CD8-positive, alpha-beta T cell (primary cell): ENCODE measurements at regions of chr11 and their contacts with region 1.

Region 1: GRCh38 chr11:66136752-66137123 is 66.7 kb downstream of the PACS1 start:
- DNase-seq: no peak
- ATAC-seq: no peak
- H3K4me3 ChIP-seq: no peak overlapping the region
- H3K4me3 Mint-ChIP-seq: no peak overlapping the region
- H3K27ac ChIP-seq: no peak overlapping the region
- H3K27ac Mint-ChIP-seq: peak overlapping the region; percentile 22
- H3K4me1 ChIP-seq: peaks cover 25% of the 10 kb centered on the region
- H3K4me1 Mint-ChIP-seq: peaks cover 58% of the 10 kb centered on the region
- H3K27me3 ChIP-seq: no peaks in the 10 kb centered on the region
- H3K27me3 Mint-ChIP-seq: no peaks in the 10 kb centered on the region
- CTCF ChIP-seq: no peak

Region 2: DNA sequence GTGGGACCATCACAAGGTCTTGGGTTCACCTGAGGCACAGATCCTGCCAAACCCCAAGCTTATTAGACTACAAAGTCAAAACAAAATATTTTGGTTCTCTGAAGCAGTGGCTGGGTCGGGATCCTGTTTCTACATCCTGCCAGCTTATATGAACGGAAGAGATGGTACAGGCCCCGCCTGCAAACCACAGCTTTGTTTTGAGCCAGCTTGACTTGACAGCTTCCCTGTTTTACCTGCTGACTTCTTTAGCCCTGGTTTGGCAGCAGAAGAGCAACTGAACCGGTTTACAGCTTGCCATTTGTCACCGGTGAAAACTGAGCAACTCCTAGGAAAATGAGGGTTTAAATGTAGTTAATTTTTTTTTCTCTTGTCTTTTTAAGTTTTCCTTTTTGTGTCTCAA is 55.2 kb before region 1 on chr11:
- CTCF ChIA-PET with region 1: interaction called, 13 read pairs
- POLR2A ChIA-PET with region 1: interaction called, 3 read pairs
- intact Hi-C with region 1: no loop called
- DNase-seq: peak; percentile 58 to 92 (median 85)
- ATAC-seq: peak; percentile 89
- H3K4me3 ChIP-seq: peak overlapping the region; percentile 28 to 40
- H3K4me3 Mint-ChIP-seq: peak overlapping the region; percentile 83
- H3K27ac ChIP-seq: peak overlapping the region; percentile 72 to 89
- H3K27ac Mint-ChIP-seq: peak overlapping the region; percentile 99
- H3K4me1 ChIP-seq: peaks cover 90% of the 10 kb centered on the region
- H3K4me1 Mint-ChIP-seq: peaks cover 92% of the 10 kb centered on the region
- H3K27me3 ChIP-seq: no peaks in the 10 kb centered on the region
- H3K27me3 Mint-ChIP-seq: no peaks in the 10 kb centered on the region
- CTCF ChIP-seq: no peak

Region 3: GRCh38 chr11:66100272-66101065 is 36.3 kb before region 1 on chr11:
- CTCF ChIA-PET with region 1: interaction called, 3 read pairs
- POLR2A ChIA-PET with region 1: no interaction called
- intact Hi-C with region 1: loop called in 1 of 2 experiments (anchors 2 kb)
- DNase-seq: peak; percentile 31 to 88 (median 73)
- ATAC-seq: peak; percentile 90
- H3K4me3 ChIP-seq: peak overlapping the region; percentile 40 to 48
- H3K4me3 Mint-ChIP-seq: peak overlapping the region; percentile 82
- H3K27ac ChIP-seq: peak overlapping the region; percentile 45 to 82
- H3K27ac Mint-ChIP-seq: peak overlapping the region; percentile 95
- H3K4me1 ChIP-seq: peaks cover 70% of the 10 kb centered on the region
- H3K4me1 Mint-ChIP-seq: peaks cover 69% of the 10 kb centered on the region
- H3K27me3 ChIP-seq: no peaks in the 10 kb centered on the region
- H3K27me3 Mint-ChIP-seq: no peaks in the 10 kb centered on the region
- CTCF ChIP-seq: no peak

Region 4: DNA sequence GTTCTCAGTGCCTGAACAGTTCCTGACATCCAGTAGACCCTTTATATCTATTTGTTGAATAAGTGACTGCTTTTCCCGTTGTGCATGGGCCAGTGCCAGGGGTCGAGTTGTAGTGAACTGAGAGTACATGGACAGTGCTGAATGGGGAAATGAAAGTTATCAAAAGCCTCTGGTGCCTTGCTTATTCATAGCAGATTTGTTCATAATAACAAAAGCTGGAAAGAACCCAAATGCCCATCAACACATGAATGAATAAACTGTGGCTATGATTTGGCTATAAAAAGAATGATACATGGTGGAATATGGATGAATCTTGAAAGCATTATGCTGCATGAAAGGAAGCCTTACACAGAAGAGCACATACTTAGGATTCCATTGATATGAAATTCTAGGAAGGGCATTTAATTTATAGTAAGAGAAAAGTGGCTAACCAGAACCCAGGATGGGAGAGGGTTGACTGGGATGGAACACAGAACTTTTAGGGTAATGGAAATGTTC is 24.1 kb before region 1 on chr11:
- CTCF ChIA-PET with region 1: interaction called, 23 read pairs
- POLR2A ChIA-PET with region 1: interaction called, 11 read pairs
- intact Hi-C with region 1: no loop called
- DNase-seq: no peak
- ATAC-seq: no peak
- H3K4me3 ChIP-seq: no peak overlapping the region
- H3K4me3 Mint-ChIP-seq: peak overlapping the region; percentile 38
- H3K27ac ChIP-seq: peak overlapping the region in 1 of 2 experiments; percentile 47
- H3K27ac Mint-ChIP-seq: peak overlapping the region; percentile 89
- H3K4me1 ChIP-seq: peaks cover 88% of the 10 kb centered on the region
- H3K4me1 Mint-ChIP-seq: peaks cover 94% of the 10 kb centered on the region
- H3K27me3 ChIP-seq: no peaks in the 10 kb centered on the region
- H3K27me3 Mint-ChIP-seq: no peaks in the 10 kb centered on the region
- CTCF ChIP-seq: no peak

Region 5: DNA sequence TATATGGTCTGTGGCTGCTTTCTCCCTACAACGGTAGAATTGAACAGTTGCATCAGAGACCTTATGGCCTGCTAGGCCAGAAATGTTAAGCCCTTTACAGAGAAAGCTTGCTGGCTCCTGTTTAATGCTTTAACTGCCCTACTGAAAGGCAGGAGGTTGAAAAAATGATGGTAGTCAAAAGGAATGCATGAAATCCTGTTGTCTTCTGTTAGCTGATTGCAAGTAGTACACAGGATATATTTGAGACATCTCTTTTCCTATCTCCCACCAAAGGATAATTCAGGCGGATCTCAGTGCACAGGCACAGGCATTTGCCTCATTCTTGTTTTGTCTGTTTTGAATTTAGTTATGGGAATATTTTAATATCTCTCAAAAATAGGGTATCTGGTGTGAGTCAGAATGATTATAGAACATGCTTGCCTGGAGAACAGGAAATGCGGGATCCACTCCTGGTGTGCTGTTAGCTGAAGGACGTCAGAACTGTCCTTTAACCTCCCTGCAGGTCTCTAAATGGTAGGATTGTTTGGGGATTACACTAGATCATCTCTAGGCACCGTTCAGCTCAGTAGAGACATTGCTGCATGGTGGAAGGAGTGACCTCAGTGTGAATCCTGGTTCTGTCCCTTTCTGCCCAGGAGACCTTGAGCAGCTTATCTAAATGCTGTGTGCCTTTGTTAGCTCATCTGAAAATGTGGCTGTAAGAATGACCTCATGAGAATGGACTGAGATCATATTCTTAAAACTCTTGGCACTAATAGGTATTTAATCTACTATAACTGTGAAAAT is 17.2 kb before region 1 on chr11:
- CTCF ChIA-PET with region 1: interaction called, 23 read pairs
- POLR2A ChIA-PET with region 1: interaction called, 11 read pairs
- intact Hi-C with region 1: no loop called
- DNase-seq: no peak
- ATAC-seq: no peak
- H3K4me3 ChIP-seq: no peak overlapping the region
- H3K4me3 Mint-ChIP-seq: peak overlapping the region; percentile 20
- H3K27ac ChIP-seq: peak overlapping the region in 1 of 2 experiments; percentile 75
- H3K27ac Mint-ChIP-seq: peak overlapping the region; percentile 83
- H3K4me1 ChIP-seq: peaks cover 83% of the 10 kb centered on the region
- H3K4me1 Mint-ChIP-seq: peaks cover 87% of the 10 kb centered on the region
- H3K27me3 ChIP-seq: no peaks in the 10 kb centered on the region
- H3K27me3 Mint-ChIP-seq: no peaks in the 10 kb centered on the region
- CTCF ChIP-seq: no peak

Region 6: DNA sequence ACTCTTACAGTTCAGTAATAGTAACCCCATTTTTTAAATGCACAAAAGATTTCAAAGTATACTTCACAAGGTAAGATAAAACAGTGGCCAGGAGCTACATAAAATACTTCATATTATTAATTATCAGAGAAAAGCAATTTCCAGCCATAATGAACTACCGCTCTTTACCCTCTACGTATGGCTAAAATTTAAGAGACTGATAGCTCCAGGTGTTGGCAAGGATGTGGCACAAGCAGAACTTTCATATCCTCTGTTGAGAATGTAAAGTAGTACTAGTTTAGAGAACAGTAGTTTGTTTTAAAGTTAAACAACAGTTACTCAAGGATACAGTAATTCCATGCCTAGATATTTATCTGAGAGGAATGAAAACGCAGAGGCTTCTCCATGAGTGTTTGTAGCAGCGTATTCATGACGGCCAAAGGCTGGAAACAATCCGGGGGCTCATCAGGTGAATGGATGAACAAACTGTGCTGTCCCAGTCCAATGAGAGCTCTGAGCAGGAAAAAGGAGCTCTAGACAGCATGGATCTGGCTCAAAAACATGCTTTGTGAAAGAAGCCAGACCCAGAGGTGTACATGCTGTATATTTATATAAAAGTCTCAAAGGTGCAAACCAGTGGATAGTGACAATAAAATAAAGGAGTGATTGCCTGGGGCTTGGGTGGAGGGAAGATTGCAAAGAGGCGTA is 18.8 kb after region 1 on chr11:
- CTCF ChIA-PET with region 1: interaction called, 14 read pairs
- POLR2A ChIA-PET with region 1: no interaction called
- intact Hi-C with region 1: no loop called
- DNase-seq: no peak
- ATAC-seq: no peak
- H3K4me3 ChIP-seq: no peak overlapping the region
- H3K4me3 Mint-ChIP-seq: no peak overlapping the region
- H3K27ac ChIP-seq: no peak overlapping the region
- H3K27ac Mint-ChIP-seq: peak overlapping the region; percentile 9
- H3K4me1 ChIP-seq: peaks cover 6% of the 10 kb centered on the region
- H3K4me1 Mint-ChIP-seq: peaks cover 58% of the 10 kb centered on the region
- H3K27me3 ChIP-seq: no peaks in the 10 kb centered on the region
- H3K27me3 Mint-ChIP-seq: no peaks in the 10 kb centered on the region
- CTCF ChIP-seq: no peak